ENCODE measurements at regions of chr10 and their contacts with region 1.

Region 1: GRCh38 chr10:93068411-93069244 is 5.1 kb upstream of the CYP26A1 start:
- DNase-seq: no peak
- H3K4me3 ChIP-seq: no peak overlapping the region
- CTCF ChIP-seq: no peak

Region 2: GRCh38 chr10:93028883-93029282 is 39.7 kb before region 1 on chr10:
- in situ Hi-C with region 1: no loop called
- DNase-seq: no peak
- H3K4me3 ChIP-seq: no peak overlapping the region
- CTCF ChIP-seq: no peak

Region 3: GRCh38 chr10:93097386-93097785 is 28.8 kb after region 1 on chr10:
- in situ Hi-C with region 1: no loop called
- DNase-seq: no peak
- H3K4me3 ChIP-seq: no peak overlapping the region
- CTCF ChIP-seq: no peak

Region 4: DNA sequence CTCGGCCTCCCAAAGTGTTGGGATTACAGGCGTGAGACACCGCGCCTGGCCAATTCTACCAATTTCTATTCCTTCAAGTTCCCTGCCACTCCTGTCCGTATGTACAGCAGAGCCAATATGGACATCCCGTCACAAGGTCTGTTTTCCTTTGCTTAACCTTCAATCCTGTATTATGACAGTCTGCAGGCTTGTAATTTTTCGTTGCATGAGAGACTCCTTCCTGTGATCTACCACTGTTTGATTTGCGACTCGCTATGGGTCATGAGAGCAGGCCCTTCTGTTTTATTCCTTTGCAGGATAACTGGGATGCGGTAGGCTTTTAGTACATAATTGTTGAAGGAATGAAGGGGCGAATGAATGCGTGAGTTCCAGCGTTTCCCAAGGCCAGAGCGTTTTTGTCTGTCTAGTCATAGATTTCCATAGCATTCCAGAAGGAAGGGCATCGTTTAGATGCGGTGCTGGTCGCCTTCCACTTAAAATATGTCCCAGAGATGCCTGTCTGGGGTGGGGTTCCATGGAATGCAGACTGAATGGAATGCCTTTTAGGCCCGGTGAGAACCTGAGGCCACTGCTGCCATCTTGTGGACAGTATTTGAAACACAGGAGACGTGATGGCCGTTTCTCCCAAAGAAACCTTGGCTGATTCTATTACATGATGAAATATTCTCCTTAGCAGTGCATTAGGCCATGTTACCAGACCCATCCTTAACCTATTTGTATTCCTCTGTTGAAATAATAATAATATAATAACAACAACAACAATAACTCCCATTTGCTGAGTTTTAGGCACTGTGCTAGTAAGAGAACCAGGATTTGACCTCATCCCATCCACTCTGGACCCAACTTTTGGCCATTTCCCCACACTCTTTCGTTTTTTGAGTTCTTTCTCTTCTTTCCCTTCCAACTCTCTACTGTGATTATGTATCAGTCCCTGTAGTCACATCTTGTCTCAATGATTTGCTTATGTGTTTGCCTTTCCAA is 220.3 kb after region 1 on chr10:
- in situ Hi-C with region 1: loop called (anchors 5 kb)
- DNase-seq: peak; percentile 80
- H3K4me3 ChIP-seq: no peak overlapping the region
- CTCF ChIP-seq: peak; percentile 77

Measured in astrocyte of the cerebellum (primary cell).